ENCODE measurements at regions of chr1 and their contacts with region 1.

Region 1: GRCh38 chr1:84781946-84782771 is 91.9 kb upstream of the SSX2IP start:
- DNase-seq: peak; percentile 89
- ATAC-seq: peak; percentile 89
- H3K4me3 Mint-ChIP-seq: peak overlapping the region; percentile 57
- H3K27ac Mint-ChIP-seq: no peak overlapping the region
- H3K4me1 Mint-ChIP-seq: peaks cover 22% of the 10 kb centered on the region
- H3K27me3 Mint-ChIP-seq: no peaks in the 10 kb centered on the region

Region 2: DNA sequence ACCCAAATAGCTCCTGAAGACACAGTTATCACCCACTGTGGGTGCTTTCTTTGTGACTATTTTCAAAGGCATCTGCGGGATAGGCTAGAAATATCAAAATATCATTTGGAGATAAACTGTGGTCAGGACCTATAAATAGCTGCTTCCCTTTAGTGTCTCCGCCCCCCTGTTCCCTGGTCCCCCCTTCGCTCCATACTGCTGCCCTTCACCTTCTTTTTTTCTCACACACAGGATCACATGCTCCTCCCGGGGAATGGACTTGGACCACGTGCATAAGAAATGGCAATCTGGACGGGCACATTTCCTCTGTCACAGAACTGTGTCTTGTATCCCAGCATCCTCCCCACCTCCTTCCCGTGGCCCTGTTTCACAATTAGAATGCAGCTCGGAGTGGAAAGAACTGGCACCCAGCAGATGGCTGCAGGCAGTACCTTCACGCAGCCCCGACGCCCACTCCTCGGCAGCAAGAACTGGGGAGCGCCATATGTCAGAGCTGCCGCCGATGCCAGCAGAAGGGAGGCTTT is 23.1 kb before region 1 on chr1:
- CTCF ChIA-PET with region 1: interaction called, 14 read pairs
- POLR2A ChIA-PET with region 1: no interaction called
- intact Hi-C with region 1: no loop called
- DNase-seq: peak; percentile 58
- ATAC-seq: peak; percentile 64
- H3K4me3 Mint-ChIP-seq: peak overlapping the region; percentile 29
- H3K27ac Mint-ChIP-seq: peak overlapping the region; percentile 14
- H3K4me1 Mint-ChIP-seq: peaks cover 16% of the 10 kb centered on the region
- H3K27me3 Mint-ChIP-seq: peaks cover 8% of the 10 kb centered on the region

Region 3: DNA sequence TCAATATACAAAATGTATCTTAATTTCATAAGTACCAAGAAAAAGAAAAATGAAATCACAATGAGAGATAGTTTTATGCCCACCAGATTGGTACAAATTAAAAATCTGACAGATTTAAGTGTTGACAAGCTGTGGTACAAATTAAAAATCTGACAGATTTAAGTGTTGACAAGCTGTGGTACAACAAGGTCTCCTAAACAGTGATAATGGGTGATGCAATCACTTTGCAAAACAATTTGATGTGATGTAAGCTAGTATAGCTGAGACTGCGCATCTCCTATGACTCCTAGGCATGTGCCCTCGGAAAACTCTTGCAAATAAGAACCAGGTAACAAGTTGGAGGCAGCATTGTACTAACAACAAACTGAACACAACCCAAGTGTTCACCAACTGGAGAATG is 10.3 kb after region 1 on chr1:
- CTCF ChIA-PET with region 1: interaction called, 15 read pairs
- POLR2A ChIA-PET with region 1: no interaction called
- intact Hi-C with region 1: no loop called
- DNase-seq: no peak
- ATAC-seq: no peak
- H3K4me3 Mint-ChIP-seq: no peak overlapping the region
- H3K27ac Mint-ChIP-seq: no peak overlapping the region
- H3K4me1 Mint-ChIP-seq: no peaks in the 10 kb centered on the region
- H3K27me3 Mint-ChIP-seq: no peaks in the 10 kb centered on the region

Region 4: GRCh38 chr1:84936116-84936810 is 154.1 kb after region 1 on chr1:
- CTCF ChIA-PET with region 1: interaction called, 15 read pairs
- POLR2A ChIA-PET with region 1: no interaction called
- intact Hi-C with region 1: loop called in 1 of 2 experiments (anchors 1 kb)
- DNase-seq: peak; percentile 25
- ATAC-seq: peak; percentile 53
- H3K4me3 Mint-ChIP-seq: no peak overlapping the region
- H3K27ac Mint-ChIP-seq: no peak overlapping the region
- H3K4me1 Mint-ChIP-seq: peaks cover 4% of the 10 kb centered on the region
- H3K27me3 Mint-ChIP-seq: no peaks in the 10 kb centered on the region